Panc1 (cell line): ENCODE measurements at regions of chr13 and their contacts with region 1.

Region 1: DNA sequence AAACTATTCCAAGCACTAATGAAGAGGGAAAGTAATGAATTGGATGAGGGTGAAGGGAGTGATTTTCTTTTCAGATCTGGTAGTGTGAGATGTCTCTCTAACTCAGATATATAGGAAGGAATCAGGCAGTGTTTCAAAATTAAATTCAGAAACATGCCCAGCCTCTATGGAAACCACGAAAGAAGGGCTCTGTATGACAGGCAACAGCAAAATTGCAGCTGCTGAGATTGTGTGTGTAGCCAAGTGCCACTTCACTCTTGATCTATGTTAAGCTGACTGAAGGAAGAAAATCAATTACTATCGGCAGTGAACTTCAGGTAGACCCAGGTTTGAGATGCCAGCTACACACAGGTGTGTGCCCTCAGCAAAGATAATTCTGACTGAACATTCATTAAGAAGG is 387.4 kb downstream of the PCDH9 start:
- DNase-seq: no peak
- ATAC-seq: no peak
- H3K4me3 ChIP-seq: no peak overlapping the region
- H3K27ac ChIP-seq: no peak overlapping the region
- H3K4me1 ChIP-seq: no peaks in the 10 kb centered on the region
- H3K27me3 ChIP-seq: no peaks in the 10 kb centered on the region
- CTCF ChIP-seq: no peak

Region 2: GRCh38 chr13:65677906-65678305 is 1164.9 kb before region 1 on chr13:
- CTCF ChIA-PET with region 1: no interaction called
- POLR2A ChIA-PET with region 1: no interaction called
- in situ Hi-C with region 1: no loop called
- intact Hi-C with region 1: loop called (anchors 5 kb)
- DNase-seq: no peak
- ATAC-seq: no peak
- H3K4me3 ChIP-seq: no peak overlapping the region
- H3K27ac ChIP-seq: no peak overlapping the region
- H3K4me1 ChIP-seq: no peaks in the 10 kb centered on the region
- H3K27me3 ChIP-seq: no peaks in the 10 kb centered on the region
- CTCF ChIP-seq: no peak